HepG2 (cell line): ENCODE measurements at regions of chr5 and their contacts with region 1.

Region 1: DNA sequence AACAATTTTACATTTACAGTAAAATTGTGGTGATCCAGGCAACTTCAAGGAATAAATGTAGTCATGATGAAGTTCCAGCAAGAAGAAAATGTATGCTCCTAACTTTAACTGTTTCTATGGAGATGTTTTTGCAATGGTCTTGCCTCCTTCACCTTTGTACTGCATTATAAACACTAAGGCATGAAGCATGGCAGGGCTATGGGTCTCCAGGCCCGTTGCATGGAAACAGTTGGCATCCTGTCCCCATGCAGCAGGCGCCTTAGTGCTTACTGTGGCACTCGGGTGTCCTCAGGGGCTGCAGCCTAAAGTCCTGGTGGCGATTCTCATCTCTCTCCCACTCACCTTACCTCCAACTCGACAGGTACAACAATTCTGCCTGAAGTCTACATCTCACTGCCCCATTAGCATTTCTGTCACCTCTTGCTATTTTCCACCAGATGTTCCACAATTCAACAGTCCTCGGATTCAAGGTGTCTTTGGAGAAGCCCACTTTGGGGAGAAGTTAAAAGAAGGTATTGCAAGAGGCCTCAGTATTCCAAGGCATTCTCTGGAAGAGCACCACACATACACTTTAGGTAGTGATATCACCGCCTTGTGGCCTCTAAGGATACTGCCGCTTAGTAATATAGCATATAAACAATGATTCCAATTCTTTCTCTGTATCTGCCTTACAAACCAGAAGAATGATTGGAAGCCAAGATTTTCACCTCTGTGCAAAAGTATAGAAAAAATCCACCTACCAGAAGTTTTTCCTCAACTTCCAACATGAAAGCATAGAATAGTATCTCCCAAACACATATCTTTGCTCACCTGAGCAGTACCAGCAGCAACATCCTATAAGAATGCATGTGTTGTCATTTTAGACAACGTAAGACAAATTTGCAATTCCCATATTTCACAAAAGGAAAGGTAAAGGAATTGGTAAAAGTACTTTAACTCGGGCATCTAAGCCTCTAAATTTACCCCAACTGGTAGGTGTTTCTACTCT is 5.1 kb downstream of the LIFR start:
- DNase-seq: peak; percentile 59
- ATAC-seq: peak; percentile 56
- H3K4me3 ChIP-seq: peak overlapping the region in 1 of 3 experiments; percentile 19; a peak in 1 of 6 replicates
- H3K27ac ChIP-seq: peak overlapping the region; percentile 94
- H3K4me1 ChIP-seq: peaks cover 79% of the 10 kb centered on the region
- H3K27me3 ChIP-seq: no peaks in the 10 kb centered on the region; a peak in 1 of 5 replicates
- CTCF ChIP-seq: peak; percentile 78
- EP300 ChIP-seq: no peak
- POLR2A ChIP-seq: no peak
- RAD21 ChIP-seq: peak; percentile 64; the same call in 1 of the 2 replicates

Region 2: DNA sequence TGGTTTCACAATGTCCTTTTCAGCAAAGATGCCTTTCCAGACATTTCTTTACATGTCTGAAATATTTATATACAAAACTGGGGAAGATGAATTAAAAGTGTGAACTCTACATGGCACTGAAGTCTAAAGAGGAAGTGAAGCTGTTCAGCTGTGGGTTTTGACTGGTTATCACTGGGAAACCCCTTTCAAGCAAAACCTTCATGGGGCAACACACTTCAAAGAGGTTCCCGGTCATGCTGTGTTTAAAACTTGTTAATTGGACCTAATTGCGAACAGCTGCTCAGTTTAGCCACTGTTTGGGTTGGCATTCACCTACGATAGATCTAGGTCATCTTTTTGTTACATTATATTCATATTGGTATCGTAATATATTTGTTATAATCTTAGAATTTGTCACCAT is 691.5 kb before region 1 on chr5:
- CTCF ChIA-PET with region 1: no interaction called
- POLR2A ChIA-PET with region 1: no interaction called
- in situ Hi-C with region 1: no loop called
- intact Hi-C with region 1: no loop called
- DNase-seq: no peak
- ATAC-seq: no peak
- H3K4me3 ChIP-seq: no peak overlapping the region
- H3K27ac ChIP-seq: no peak overlapping the region
- H3K4me1 ChIP-seq: no peaks in the 10 kb centered on the region
- H3K27me3 ChIP-seq: peaks cover 0 to 6% of the 10 kb centered on the region in 2 experiments; a peak in 1 of 5 replicates
- CTCF ChIP-seq: no peak
- EP300 ChIP-seq: no peak
- POLR2A ChIP-seq: no peak
- RAD21 ChIP-seq: no peak

Region 3: DNA sequence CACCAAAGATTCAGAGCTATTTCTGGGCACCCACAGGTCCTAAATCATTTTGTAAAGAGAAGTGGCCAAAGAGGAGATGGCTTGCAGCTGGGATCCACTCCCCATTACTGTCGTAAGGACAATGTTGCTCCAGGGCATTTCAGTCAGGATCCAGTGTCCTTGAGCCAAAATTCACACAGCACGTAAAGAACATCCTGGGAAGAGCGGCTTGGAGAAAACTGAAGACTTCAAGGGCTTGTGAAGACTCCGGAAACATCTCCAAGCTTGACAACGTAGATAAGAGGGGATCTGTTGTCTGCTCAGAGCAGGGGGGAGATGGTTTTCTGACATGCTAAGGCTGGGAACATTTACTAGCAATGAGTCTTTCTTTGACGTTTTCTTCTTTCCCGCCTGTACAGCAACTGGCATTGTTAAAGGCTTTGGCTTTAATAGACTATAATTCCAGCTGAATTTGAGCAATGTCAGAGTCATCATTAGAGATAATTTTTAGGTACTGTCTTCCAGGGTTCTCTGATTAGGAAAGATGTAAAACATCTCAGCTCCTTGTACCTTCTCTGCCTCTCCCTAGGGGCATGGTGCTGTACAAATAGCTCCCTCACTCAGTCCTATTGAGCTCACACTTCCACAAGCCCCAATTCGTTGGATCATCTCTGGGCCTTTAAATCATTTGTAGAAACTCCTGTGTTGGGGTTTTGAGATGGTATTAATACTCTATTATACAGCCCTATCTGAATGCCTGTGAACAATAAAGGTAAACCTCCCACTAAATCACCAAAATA is 253.3 kb before region 1 on chr5:
- CTCF ChIA-PET with region 1: no interaction called
- POLR2A ChIA-PET with region 1: no interaction called
- in situ Hi-C with region 1: no loop called
- intact Hi-C with region 1: no loop called
- DNase-seq: no peak
- ATAC-seq: no peak
- H3K4me3 ChIP-seq: no peak overlapping the region
- H3K27ac ChIP-seq: no peak overlapping the region
- H3K4me1 ChIP-seq: no peaks in the 10 kb centered on the region
- H3K27me3 ChIP-seq: no peaks in the 10 kb centered on the region
- CTCF ChIP-seq: no peak
- EP300 ChIP-seq: no peak
- POLR2A ChIP-seq: no peak
- RAD21 ChIP-seq: no peak

Region 4: DNA sequence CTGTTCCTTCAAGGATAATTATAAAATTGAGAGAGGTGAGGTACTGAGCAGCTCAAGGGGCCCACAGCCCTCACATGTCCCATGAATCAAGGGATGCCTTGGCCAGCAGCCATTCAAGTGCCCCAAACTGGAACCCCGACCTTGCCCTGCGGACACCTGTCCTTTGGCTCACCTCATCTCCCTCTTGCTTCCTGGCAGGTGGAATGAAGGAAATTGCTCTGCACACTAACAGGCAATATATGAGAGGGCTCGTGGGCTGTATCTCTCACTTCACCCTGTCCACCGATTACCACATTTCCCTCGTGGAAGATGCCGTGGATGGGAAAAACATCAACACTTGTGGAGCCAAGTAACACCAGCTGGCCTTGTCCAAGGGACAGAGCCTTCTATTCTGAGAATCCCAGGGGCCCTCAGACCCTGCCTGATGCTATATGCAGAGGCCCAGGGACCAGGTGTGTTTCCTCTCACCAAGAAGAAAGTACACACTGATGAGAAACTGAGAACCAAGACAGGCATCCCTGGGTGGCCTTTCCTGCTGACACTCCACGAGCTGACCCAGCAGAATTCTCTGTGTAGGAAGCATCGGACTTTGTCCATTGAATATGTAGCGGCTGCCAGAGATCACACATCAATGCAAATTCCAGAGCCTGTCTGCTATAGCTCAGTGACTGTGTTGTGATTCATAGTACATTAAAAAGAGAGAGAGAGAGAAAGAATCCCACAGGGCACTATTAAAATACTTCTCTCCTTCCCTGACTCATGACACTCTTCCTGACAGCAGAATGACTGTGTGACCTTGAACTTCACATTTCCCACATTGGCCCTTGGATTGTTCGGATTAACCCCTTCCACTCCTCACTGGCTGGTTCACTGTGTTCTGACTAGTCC is 87.4 kb before region 1 on chr5:
- CTCF ChIA-PET with region 1: no interaction called
- POLR2A ChIA-PET with region 1: no interaction called
- in situ Hi-C with region 1: no loop called
- intact Hi-C with region 1: loop called (anchors 2 kb)
- DNase-seq: peak; percentile 83
- ATAC-seq: peak; percentile 91
- H3K4me3 ChIP-seq: no peak overlapping the region
- H3K27ac ChIP-seq: no peak overlapping the region
- H3K4me1 ChIP-seq: peaks cover 64% of the 10 kb centered on the region
- H3K27me3 ChIP-seq: no peaks in the 10 kb centered on the region; a peak in 1 of 5 replicates
- CTCF ChIP-seq: no peak
- EP300 ChIP-seq: no peak
- POLR2A ChIP-seq: no peak
- RAD21 ChIP-seq: no peak

Region 5: GRCh38 chr5:38497946-38498345 is 53.4 kb before region 1 on chr5:
- CTCF ChIA-PET with region 1: interaction called, 3 read pairs
- POLR2A ChIA-PET with region 1: no interaction called
- in situ Hi-C with region 1: no loop called
- intact Hi-C with region 1: loop called (anchors 5 kb)
- DNase-seq: peak; percentile 27
- ATAC-seq: peak; percentile 85
- H3K4me3 ChIP-seq: no peak overlapping the region
- H3K27ac ChIP-seq: no peak overlapping the region
- H3K4me1 ChIP-seq: no peaks in the 10 kb centered on the region
- H3K27me3 ChIP-seq: no peaks in the 10 kb centered on the region
- CTCF ChIP-seq: peak; percentile 59
- EP300 ChIP-seq: no peak
- POLR2A ChIP-seq: no peak
- RAD21 ChIP-seq: 0 out of 2 replicates have a peak, but pooled peaks have one; percentile 30

Region 6: GRCh38 chr5:38515646-38516045 is 35.7 kb before region 1 on chr5:
- CTCF ChIA-PET with region 1: no interaction called
- POLR2A ChIA-PET with region 1: no interaction called
- in situ Hi-C with region 1: no loop called
- intact Hi-C with region 1: loop called (anchors 5 kb)
- DNase-seq: peak; percentile 17
- ATAC-seq: peak; percentile 88
- H3K4me3 ChIP-seq: no peak overlapping the region
- H3K27ac ChIP-seq: no peak overlapping the region
- H3K4me1 ChIP-seq: no peaks in the 10 kb centered on the region
- H3K27me3 ChIP-seq: no peaks in the 10 kb centered on the region
- CTCF ChIP-seq: peak; percentile 48
- EP300 ChIP-seq: no peak
- POLR2A ChIP-seq: no peak
- RAD21 ChIP-seq: no peak

Region 7: GRCh38 chr5:38532165-38532669 is 19.1 kb before region 1 on chr5:
- CTCF ChIA-PET with region 1: interaction called, 18 read pairs
- POLR2A ChIA-PET with region 1: interaction called, 59 read pairs
- in situ Hi-C with region 1: no loop called
- intact Hi-C with region 1: loop called (anchors 1 kb)
- DNase-seq: no peak
- ATAC-seq: no peak
- H3K4me3 ChIP-seq: peak overlapping the region in 1 of 3 experiments; percentile 29; a peak in 1 of 6 replicates
- H3K27ac ChIP-seq: peak overlapping the region; percentile 99
- H3K4me1 ChIP-seq: peaks cover 85% of the 10 kb centered on the region
- H3K27me3 ChIP-seq: no peaks in the 10 kb centered on the region
- CTCF ChIP-seq: no peak
- EP300 ChIP-seq: no peak
- POLR2A ChIP-seq: 0 out of 4 replicates have a peak, but pooled peaks of 1 of the 2 experiments have one; percentile 28
- RAD21 ChIP-seq: no peak

Region 8: GRCh38 chr5:38666668-38667498 is 115.6 kb after region 1 on chr5:
- CTCF ChIA-PET with region 1: no interaction called
- POLR2A ChIA-PET with region 1: no interaction called
- in situ Hi-C with region 1: no loop called
- intact Hi-C with region 1: loop called (anchors 5 kb)
- DNase-seq: peak; percentile 25
- ATAC-seq: peak; percentile 98
- H3K4me3 ChIP-seq: no peak overlapping the region
- H3K27ac ChIP-seq: no peak overlapping the region
- H3K4me1 ChIP-seq: peaks cover 7% of the 10 kb centered on the region
- H3K27me3 ChIP-seq: no peaks in the 10 kb centered on the region; a peak in 2 of 5 replicates
- CTCF ChIP-seq: peak; percentile 73
- EP300 ChIP-seq: no peak
- POLR2A ChIP-seq: no peak
- RAD21 ChIP-seq: peak; percentile 60; the same call in 1 of the 2 replicates

Region 9: DNA sequence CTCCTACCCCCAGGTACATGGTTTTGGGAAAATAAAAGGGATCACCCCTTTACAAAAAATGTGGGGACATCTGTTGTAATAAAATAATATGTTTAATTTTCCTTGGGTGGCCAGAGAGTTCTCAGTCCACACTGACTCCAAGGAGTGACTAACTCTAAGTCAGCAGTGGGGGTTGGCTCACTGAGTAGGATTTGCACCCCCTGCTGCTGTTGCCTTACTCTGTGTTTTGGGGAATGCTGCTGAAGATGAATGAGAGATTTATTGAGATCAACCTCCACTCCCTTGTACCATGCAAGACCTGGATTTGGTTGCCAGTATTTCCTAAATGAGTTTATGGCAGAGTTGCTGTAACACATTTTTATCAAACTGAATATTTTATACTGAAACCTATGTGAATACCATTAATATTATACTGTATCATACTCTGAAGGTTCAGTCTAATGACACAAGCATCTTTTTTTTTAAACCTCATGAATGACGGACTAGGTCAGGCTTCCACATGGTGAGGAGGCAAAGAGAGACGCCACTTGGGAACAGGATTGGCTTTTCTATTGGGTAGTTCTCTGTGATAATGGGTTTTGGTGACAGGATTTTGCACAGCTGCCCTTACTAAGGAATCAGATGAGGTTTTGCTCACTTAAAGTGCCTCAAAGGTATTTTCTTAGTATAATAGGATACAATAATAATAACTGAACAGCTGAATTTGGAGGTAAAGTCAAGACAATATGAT is 173.1 kb after region 1 on chr5:
- CTCF ChIA-PET with region 1: no interaction called
- POLR2A ChIA-PET with region 1: no interaction called
- in situ Hi-C with region 1: no loop called
- intact Hi-C with region 1: no loop called
- DNase-seq: no peak
- ATAC-seq: no peak
- H3K4me3 ChIP-seq: no peak overlapping the region
- H3K27ac ChIP-seq: no peak overlapping the region
- H3K4me1 ChIP-seq: no peaks in the 10 kb centered on the region
- H3K27me3 ChIP-seq: no peaks in the 10 kb centered on the region
- CTCF ChIP-seq: no peak
- EP300 ChIP-seq: no peak
- POLR2A ChIP-seq: no peak
- RAD21 ChIP-seq: no peak

Region 10: GRCh38 chr5:38831909-38832308 is 280.6 kb after region 1 on chr5:
- CTCF ChIA-PET with region 1: no interaction called
- POLR2A ChIA-PET with region 1: no interaction called
- in situ Hi-C with region 1: no loop called
- intact Hi-C with region 1: no loop called
- DNase-seq: peak; percentile 14
- ATAC-seq: peak; percentile 7; the same call in 2 of the 3 replicates
- H3K4me3 ChIP-seq: no peak overlapping the region
- H3K27ac ChIP-seq: peak overlapping the region; percentile 30
- H3K4me1 ChIP-seq: peaks cover 39% of the 10 kb centered on the region
- H3K27me3 ChIP-seq: no peaks in the 10 kb centered on the region
- CTCF ChIP-seq: peak; percentile 47
- EP300 ChIP-seq: no peak
- POLR2A ChIP-seq: no peak
- RAD21 ChIP-seq: no peak